CD14-positive monocyte (primary cell): ENCODE measurements at regions of chr1 and their contacts with region 1.

Region 1: DNA sequence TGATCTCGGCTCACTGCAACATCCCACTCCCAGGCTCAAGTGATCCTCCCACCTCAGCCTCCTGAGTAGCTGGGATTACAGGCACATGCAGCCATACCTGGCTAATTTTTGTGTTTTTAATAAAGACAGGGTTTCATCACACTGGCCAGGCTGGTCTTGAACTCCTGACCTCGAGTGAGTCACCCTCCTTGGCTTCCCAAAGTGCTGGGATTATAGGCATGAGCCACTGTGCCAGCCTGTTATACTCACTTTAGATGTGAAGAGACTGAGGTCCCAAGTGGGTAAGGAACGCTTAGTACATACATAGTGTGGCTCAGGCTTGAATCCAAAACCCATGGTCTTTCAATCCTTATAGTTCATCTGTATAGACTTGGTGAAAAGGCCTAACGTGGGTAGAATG is 63.7 kb upstream of the EPS8L3 start:
- DNase-seq: peak in 1 of 3 donors; percentile 41
- H3K4me3 ChIP-seq: no peak overlapping the region
- H3K4me3 Mint-ChIP-seq: no peak overlapping the region
- H3K27ac ChIP-seq: no peak overlapping the region
- H3K27ac Mint-ChIP-seq: peak overlapping the region in 1 of 7 donors; percentile 33
- H3K4me1 ChIP-seq: peaks cover 42 to 51% of the 10 kb centered on the region in 2 donors
- H3K4me1 Mint-ChIP-seq: peaks cover 48% of the 10 kb centered on the region
- H3K27me3 ChIP-seq: no peaks in the 10 kb centered on the region
- H3K27me3 Mint-ChIP-seq: peaks cover 2 to 8% (median 7%) of the 10 kb centered on the region in 3 donors
- CTCF ChIP-seq: no peak

Region 2: DNA sequence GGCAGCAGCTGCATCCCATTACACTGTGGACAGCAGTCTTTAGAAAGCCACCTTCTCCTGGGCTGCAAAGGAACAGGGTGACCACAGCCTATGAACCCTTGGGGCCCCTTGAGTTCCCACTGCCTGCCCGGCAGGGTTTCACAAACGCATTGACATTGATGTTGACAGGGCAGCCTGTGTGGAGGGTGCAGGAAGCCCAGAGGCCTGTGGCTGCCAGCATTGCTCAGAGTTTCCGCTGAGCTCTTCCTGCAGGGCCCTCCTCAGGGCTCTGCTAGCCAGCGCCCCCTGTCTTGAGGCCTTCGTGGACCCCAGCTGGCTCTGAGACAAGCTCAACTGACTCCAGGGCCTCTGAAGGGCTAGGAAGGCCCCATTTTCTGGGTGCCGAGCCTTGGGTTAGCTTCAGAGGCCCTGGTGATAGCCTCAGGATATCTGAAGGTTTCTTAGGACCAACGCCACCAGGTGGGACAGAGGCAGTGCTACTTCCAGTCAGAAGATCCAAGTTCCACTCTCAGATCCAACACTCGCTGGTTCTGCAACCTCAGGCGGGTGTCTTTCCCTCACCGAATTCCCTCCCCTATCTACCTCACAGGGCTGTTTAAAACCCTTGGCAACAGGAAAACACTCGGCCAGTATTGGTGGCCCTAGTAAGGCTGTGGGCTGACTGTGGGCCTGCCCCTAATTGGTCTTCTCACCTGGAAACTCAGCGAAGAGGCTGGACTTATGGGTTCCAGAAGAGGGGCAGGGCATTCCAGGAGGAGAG is 36.6 kb before region 1 on chr1:
- intact Hi-C with region 1: loop called in 1 of 2 experiments (anchors 5 kb)
- DNase-seq: peak; percentile 82 to 88 (median 85)
- H3K4me3 ChIP-seq: no peak overlapping the region
- H3K4me3 Mint-ChIP-seq: peak overlapping the region in 1 of 2 donors; percentile 1
- H3K27ac ChIP-seq: no peak overlapping the region
- H3K27ac Mint-ChIP-seq: peak overlapping the region in 6 of 7 donors; percentile 33 to 86 (median 68)
- H3K4me1 ChIP-seq: peaks cover 49 to 61% of the 10 kb centered on the region in 2 donors
- H3K4me1 Mint-ChIP-seq: peaks cover 59% of the 10 kb centered on the region
- H3K27me3 ChIP-seq: no peaks in the 10 kb centered on the region
- H3K27me3 Mint-ChIP-seq: peaks cover 4 to 20% (median 14%) of the 10 kb centered on the region in 3 donors
- CTCF ChIP-seq: peak; percentile 74